ENCODE measurements at regions of chr17 and their contacts with region 1.

Region 1: GRCh38 chr17:4986951-4987766 is at the start of gene CAMTA2:
- DNase-seq: peak; percentile 96
- H3K4me3 Mint-ChIP-seq: peak within 1 kb of the TSS; percentile 97
- H3K27ac Mint-ChIP-seq: peak within 1 kb of the TSS; percentile 93
- H3K4me1 Mint-ChIP-seq: peaks cover 45% of the 10 kb centered on the region
- H3K27me3 Mint-ChIP-seq: no peaks in the 10 kb centered on the region
- total RNA-seq, gene CAMTA2: 87.7 and 89.7 TPM in 2 replicates

Region 2: GRCh38 chr17:4908301-4908700 is 78.9 kb before region 1 on chr17:
- intact Hi-C with region 1: loop called (anchors 2 kb)
- DNase-seq: peak; percentile 69
- H3K4me3 Mint-ChIP-seq: no peak overlapping the region
- H3K27ac Mint-ChIP-seq: no peak overlapping the region
- H3K4me1 Mint-ChIP-seq: peaks cover 10% of the 10 kb centered on the region
- H3K27me3 Mint-ChIP-seq: peaks cover 8% of the 10 kb centered on the region

Region 3: DNA sequence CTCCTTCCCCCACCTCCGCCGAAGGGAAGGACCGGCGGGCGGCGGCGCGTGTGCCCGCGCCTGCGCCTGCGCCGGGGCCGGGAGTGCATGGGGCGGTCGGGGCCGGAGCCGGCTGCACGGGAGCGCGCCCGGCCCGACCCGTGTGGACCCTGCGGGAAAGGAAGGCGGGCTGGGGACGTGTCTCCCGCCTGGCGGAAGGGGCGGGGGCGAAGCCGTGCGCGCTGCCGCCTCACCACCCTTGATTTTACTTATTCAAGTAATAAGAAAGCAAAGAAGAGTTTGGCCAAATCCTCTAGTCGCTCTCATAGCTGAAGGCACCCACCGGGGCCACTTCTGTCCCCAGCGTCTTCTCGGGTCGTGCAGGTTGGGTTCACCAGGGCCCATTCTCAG is 38.2 kb before region 1 on chr17:
- intact Hi-C with region 1: loop called (anchors 5 kb)
- DNase-seq: peak; percentile 94
- H3K4me3 Mint-ChIP-seq: peak overlapping the region; percentile 95
- H3K27ac Mint-ChIP-seq: peak overlapping the region; percentile 99
- H3K4me1 Mint-ChIP-seq: peaks cover 44% of the 10 kb centered on the region
- H3K27me3 Mint-ChIP-seq: no peaks in the 10 kb centered on the region

Region 4: GRCh38 chr17:4966844-4967538 is 20.2 kb before region 1 on chr17:
- intact Hi-C with region 1: loop called (anchors 1 kb)
- DNase-seq: peak; percentile 98
- H3K4me3 Mint-ChIP-seq: no peak overlapping the region
- H3K27ac Mint-ChIP-seq: peak overlapping the region; percentile 82
- H3K4me1 Mint-ChIP-seq: peaks cover 12% of the 10 kb centered on the region
- H3K27me3 Mint-ChIP-seq: no peaks in the 10 kb centered on the region

Region 5: GRCh38 chr17:4997302-4998026 is 10.3 kb after region 1 on chr17 and contains the starts of genes INCA1 and KIF1C:
- intact Hi-C with region 1: loop called (anchors 1 kb)
- DNase-seq: peak; percentile 98
- H3K4me3 Mint-ChIP-seq: peak within 1 kb of the TSS; percentile 89
- H3K27ac Mint-ChIP-seq: peak within 1 kb of the TSS; percentile 82
- H3K4me1 Mint-ChIP-seq: peaks cover 23% of the 10 kb centered on the region
- H3K27me3 Mint-ChIP-seq: peaks cover 6% of the 10 kb centered on the region
- total RNA-seq, gene INCA1: 0.56 and 0.69 TPM in 2 replicates
- total RNA-seq, gene KIF1C: 62.3 TPM in 2 replicates

Region 6: GRCh38 chr17:5019475-5019956 is 32.4 kb after region 1 on chr17:
- intact Hi-C with region 1: no loop called
- DNase-seq: peak; percentile 73
- H3K4me3 Mint-ChIP-seq: no peak overlapping the region
- H3K27ac Mint-ChIP-seq: peak overlapping the region; percentile 61
- H3K4me1 Mint-ChIP-seq: peaks cover 9% of the 10 kb centered on the region
- H3K27me3 Mint-ChIP-seq: no peaks in the 10 kb centered on the region

Region 7: GRCh38 chr17:5031365-5032082 is 44.4 kb after region 1 on chr17:
- intact Hi-C with region 1: loop called (anchors 2 kb)
- DNase-seq: peak; percentile 95
- H3K4me3 Mint-ChIP-seq: peak overlapping the region; percentile 81
- H3K27ac Mint-ChIP-seq: peak overlapping the region; percentile 92
- H3K4me1 Mint-ChIP-seq: peaks cover 22% of the 10 kb centered on the region
- H3K27me3 Mint-ChIP-seq: peaks cover 2% of the 10 kb centered on the region